Ascending aorta (tissue), 2 donors: ENCODE measurements at regions of chr10 and their contacts with region 1.

Region 1: DNA sequence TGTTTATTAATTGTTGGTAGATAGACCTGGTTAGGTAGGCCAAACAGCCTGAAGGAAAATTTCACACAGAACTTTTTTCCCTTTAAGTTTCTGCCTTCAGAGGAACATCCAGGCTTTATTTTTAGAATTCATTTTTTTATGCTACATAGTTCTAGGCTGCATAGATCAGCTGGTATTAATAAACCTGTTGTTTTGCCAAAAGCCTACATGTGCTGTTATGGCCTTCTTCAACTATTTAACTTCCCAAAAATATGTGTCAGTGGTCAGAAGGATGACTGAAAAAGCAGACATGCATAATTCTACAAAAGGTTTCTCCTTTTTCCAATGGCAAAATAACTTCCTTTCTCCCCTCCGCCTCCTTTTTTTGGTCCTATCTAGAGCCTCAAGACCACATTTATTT is 303.0 kb upstream of the DKK1 start:
- DNase-seq: no peak
- H3K4me3 ChIP-seq: no peak overlapping the region
- H3K27ac ChIP-seq: peak overlapping the region; percentile 82
- H3K4me1 ChIP-seq: peaks cover 0 to 33% of the 10 kb centered on the region in 2 donors
- H3K27me3 ChIP-seq: no peaks in the 10 kb centered on the region
- CTCF ChIP-seq: no peak

Region 2: DNA sequence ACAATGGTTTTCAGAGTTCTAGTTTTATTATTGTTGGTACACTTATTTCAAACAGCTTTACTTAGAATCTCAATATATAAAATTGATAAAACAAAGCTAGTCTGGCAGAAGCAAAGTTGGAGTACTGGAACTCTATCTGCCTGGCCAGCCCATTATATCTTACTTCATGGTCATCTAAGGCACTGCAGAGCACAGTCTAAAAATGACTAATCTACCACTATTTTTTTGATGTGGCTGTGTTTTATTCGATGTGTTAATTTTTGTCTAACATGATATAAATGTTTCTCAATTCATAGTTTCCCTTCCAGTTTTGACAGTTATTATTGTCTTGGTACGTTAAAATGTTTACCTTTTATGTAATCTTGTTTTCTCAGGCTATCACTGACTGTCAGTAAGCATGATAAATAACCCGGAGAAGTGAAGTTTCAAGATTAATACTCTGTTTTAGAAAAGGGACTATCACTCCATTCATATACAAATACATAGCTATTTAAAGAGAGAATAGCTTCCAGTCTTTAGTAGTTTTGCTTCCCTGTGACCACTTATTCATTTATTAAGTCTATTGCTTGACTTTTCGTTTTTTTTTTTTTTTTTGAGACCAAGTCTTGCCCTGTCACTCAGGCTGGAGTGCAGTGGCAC is 251.1 kb before region 1 on chr10:
- intact Hi-C with region 1: no loop called
- DNase-seq: no peak
- H3K4me3 ChIP-seq: no peak overlapping the region
- H3K27ac ChIP-seq: peak overlapping the region; percentile 44 to 69
- H3K4me1 ChIP-seq: peaks cover 0 to 3% of the 10 kb centered on the region in 2 donors
- H3K27me3 ChIP-seq: no peaks in the 10 kb centered on the region
- CTCF ChIP-seq: no peak

Region 3: GRCh38 chr10:52128056-52128683 is 117.1 kb after region 1 on chr10:
- intact Hi-C with region 1: loop called (anchors 10 kb)
- DNase-seq: no peak
- H3K4me3 ChIP-seq: no peak overlapping the region
- H3K27ac ChIP-seq: no peak overlapping the region
- H3K4me1 ChIP-seq: no peaks in the 10 kb centered on the region
- H3K27me3 ChIP-seq: no peaks in the 10 kb centered on the region
- CTCF ChIP-seq: no peak

Region 4: DNA sequence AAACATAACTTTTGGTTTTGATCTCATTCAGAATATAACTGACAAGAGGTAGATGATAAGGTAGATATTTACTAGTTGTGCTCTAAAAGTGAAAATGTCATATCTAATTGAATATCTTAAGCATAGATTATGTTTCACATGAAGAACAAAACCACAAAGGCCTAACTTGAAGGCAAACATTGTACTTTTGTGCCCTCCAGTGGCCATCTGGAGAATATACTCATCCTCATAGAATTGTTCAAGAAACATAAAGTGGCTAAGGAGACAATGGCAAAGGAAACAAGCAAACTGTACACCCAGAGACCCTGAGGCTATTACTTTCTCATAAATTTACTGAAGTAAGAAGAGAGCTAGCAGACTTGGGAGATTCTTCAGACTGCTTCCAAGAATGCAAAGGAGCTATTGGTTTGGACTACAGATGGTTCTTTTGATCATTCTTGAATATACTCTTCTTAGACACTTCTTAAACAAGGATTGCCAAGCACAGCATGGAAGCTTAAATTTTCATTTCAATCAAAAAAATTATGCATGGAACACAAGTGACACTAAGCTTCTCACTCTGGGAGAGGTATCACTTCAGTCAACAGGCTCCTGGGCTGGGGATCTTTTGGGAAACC is 204.7 kb after region 1 on chr10:
- intact Hi-C with region 1: loop called (anchors 10 kb)
- DNase-seq: no peak
- H3K4me3 ChIP-seq: no peak overlapping the region
- H3K27ac ChIP-seq: peak overlapping the region in 1 of 2 donors; percentile 63
- H3K4me1 ChIP-seq: peaks cover 4 to 22% of the 10 kb centered on the region in 2 donors
- H3K27me3 ChIP-seq: no peaks in the 10 kb centered on the region
- CTCF ChIP-seq: peak; percentile 66 to 68 (median 67)